Activated naive CD4-positive, alpha-beta T cell treated with anti-CD3 and anti-CD28 coated beads for 36 hours (primary cell): ENCODE measurements at regions of chr6 and their contacts with region 1.

Region 1: GRCh38 chr6:28266962-28267694 is at the start of gene ZSCAN26:
- DNase-seq: peak; percentile 87
- H3K4me3 Mint-ChIP-seq: no peak within 1 kb of the TSS
- H3K27ac Mint-ChIP-seq: no peak within 1 kb of the TSS
- H3K4me1 Mint-ChIP-seq: peaks cover 43% of the 10 kb centered on the region
- H3K27me3 Mint-ChIP-seq: no peaks in the 10 kb centered on the region
- total RNA-seq, gene ZSCAN26: 2.7 to 3.8 TPM

Region 2: DNA sequence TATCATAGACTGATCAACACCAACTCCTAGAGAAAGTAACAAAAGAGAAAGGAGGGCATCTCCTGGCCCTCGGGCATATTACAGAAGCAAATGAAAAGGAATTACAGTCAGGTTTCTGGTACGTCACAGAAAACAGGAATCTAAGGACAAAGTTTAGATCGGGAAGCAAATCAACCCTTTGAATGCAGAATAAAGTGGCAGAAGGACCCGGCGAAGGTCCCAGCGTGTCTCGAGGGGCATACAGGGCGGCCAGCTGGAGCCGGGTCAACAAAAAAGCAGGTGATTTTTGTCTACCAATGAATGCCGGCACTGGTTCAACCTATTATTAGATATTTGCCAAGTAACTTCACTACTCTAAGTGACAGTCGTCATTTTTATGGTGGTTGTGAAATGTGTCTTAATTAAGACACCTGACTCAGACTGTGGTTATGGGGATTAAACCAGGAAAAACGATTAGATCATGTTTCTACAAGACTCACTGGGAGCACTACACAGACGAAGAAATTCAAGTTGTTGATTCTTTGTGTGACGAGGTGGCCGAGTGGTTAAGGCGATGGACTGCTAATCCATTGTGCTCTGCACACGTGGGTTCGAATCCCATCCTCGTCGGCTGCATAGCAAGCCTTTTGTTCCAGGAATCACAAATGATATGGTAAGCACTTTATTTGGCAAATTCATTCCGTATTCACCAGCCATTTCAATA is 54.5 kb before region 1 on chr6:
- CTCF ChIA-PET with region 1: no interaction called
- intact Hi-C with region 1: loop called (anchors 5 kb)
- DNase-seq: peak; percentile 86
- H3K4me3 Mint-ChIP-seq: peak overlapping the region; percentile 70
- H3K27ac Mint-ChIP-seq: peak overlapping the region; percentile 38
- H3K4me1 Mint-ChIP-seq: peaks cover 18% of the 10 kb centered on the region
- H3K27me3 Mint-ChIP-seq: peaks cover 72% of the 10 kb centered on the region

Region 3: GRCh38 chr6:28252009-28252975 is 14.8 kb before region 1 on chr6 and contains the start of gene ZKSCAN4:
- CTCF ChIA-PET with region 1: interaction called, 6 read pairs
- intact Hi-C with region 1: loop called (anchors 1 kb)
- DNase-seq: peak; percentile 88
- H3K4me3 Mint-ChIP-seq: peak within 1 kb of the TSS; percentile 89
- H3K27ac Mint-ChIP-seq: peak within 1 kb of the TSS; percentile 83
- H3K4me1 Mint-ChIP-seq: peaks cover 23% of the 10 kb centered on the region
- H3K27me3 Mint-ChIP-seq: no peaks in the 10 kb centered on the region
- total RNA-seq, gene ZKSCAN4: 3.5 TPM

Region 4: GRCh38 chr6:28335564-28336283 is 68.6 kb after region 1 on chr6 and contains the start of gene ZSCAN31:
- CTCF ChIA-PET with region 1: no interaction called
- intact Hi-C with region 1: loop called (anchors 1 kb)
- DNase-seq: peak; percentile 90
- H3K4me3 Mint-ChIP-seq: no peak within 1 kb of the TSS
- H3K27ac Mint-ChIP-seq: no peak within 1 kb of the TSS
- H3K4me1 Mint-ChIP-seq: peaks cover 4% of the 10 kb centered on the region
- H3K27me3 Mint-ChIP-seq: no peaks in the 10 kb centered on the region
- total RNA-seq, gene ZSCAN31: 0.62 to 0.89 TPM

Region 5: DNA sequence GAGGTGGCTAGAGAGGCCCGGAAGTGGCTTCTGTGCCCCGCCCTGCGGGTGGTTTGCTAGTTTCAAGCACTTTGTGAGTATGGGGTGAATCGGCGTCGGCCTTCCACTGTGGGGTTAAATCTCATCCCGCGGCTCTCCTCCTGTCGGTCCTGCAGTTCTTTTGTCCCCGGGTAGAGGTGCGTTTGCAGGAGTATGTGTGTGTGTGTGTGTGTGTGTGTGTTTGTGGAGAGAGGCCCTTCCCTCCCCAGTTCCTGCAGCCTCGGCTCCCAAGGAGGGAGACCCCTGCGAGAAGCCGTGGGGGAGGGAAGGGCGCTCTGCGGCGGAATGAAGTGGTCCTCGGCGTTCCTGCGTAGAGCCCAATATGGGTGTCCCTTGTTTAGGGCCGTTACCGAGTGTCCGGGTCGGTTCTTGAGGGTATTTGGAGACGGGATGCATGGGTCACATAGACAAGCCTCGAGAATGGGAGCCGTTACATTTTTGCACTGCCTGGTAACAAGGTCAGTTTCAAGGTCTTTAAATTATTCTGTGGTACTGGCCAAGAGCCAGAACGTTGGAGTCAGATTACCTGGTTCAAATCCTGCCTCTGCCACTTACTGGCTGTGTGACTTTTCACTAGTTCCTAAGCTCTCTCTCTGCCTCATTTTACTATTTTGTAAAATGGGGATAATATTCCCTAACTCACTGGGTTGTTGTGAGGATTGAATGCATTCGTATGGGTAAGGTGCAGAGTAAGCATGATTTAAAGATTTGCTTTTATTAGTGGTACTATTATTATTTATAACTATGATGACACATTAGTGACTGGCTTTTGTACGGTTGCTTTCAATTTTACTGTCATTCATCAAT is 83.0 kb after region 1 on chr6 and contains the start of gene ZKSCAN3:
- CTCF ChIA-PET with region 1: no interaction called
- intact Hi-C with region 1: loop called (anchors 1 kb)
- DNase-seq: peak; percentile 93
- H3K4me3 Mint-ChIP-seq: peak within 1 kb of the TSS; percentile 97
- H3K27ac Mint-ChIP-seq: peak within 1 kb of the TSS; percentile 87
- H3K4me1 Mint-ChIP-seq: peaks cover 22% of the 10 kb centered on the region
- H3K27me3 Mint-ChIP-seq: peaks cover 6% of the 10 kb centered on the region
- total RNA-seq, gene ZKSCAN3: 1.3 TPM

Region 6: GRCh38 chr6:28355743-28356665 is 88.9 kb after region 1 on chr6:
- CTCF ChIA-PET with region 1: interaction called, 3 read pairs
- intact Hi-C with region 1: loop called (anchors 1 kb)
- DNase-seq: peak; percentile 79
- H3K4me3 Mint-ChIP-seq: peak overlapping the region; percentile 80
- H3K27ac Mint-ChIP-seq: peak overlapping the region; percentile 75
- H3K4me1 Mint-ChIP-seq: peaks cover 23% of the 10 kb centered on the region
- H3K27me3 Mint-ChIP-seq: no peaks in the 10 kb centered on the region

Region 7: DNA sequence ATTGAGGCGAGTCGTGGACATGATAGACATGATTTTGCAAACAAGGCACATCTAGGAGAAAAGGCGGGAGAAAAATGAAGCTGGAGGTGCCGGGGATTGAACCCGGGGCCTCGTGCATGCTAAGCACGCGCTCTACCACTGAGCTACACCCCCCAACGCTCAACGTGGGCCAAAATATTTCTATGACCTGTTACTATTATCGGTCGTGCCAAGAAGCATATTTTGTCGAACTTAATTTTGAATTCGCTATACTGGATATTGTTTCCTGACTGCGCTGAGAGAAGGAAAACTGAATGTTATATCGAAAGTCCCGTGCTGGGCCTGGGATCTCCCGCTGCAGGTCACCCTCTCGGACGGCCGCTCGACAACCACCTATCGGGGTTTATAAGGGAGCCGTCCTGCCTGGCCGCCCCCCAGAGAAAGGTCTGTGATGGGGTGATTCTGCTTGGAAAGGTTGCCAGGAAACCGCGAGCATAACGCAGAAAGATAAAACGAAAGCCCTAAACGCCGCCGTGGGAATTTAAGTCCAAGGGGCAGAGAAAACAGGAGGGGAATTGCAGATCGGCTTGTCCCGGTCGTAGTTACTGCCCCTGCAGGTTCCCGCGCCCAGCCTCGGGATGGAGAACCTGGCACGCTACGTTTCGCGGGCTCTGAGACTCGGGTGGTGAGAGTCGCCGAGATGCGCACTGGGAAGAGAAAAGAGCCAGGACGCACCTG is 596.6 kb after region 1 on chr6:
- CTCF ChIA-PET with region 1: no interaction called
- intact Hi-C with region 1: loop called (anchors 10 kb)
- DNase-seq: peak; percentile 89
- H3K4me3 Mint-ChIP-seq: peak overlapping the region; percentile 86
- H3K27ac Mint-ChIP-seq: peak overlapping the region; percentile 92
- H3K4me1 Mint-ChIP-seq: peaks cover 33% of the 10 kb centered on the region
- H3K27me3 Mint-ChIP-seq: peaks cover 3% of the 10 kb centered on the region